HCT116 (cell line): ENCODE measurements at regions of chr17 and their contacts with region 1.

Region 1: GRCh38 chr17:58587702-58588254 is 73.3 kb upstream of the MTMR4 start:
- DNase-seq: peak; percentile 64
- ATAC-seq: peak; percentile 98
- H3K4me3 ChIP-seq: no peak overlapping the region
- H3K27ac ChIP-seq: no peak overlapping the region
- H3K4me1 ChIP-seq: no peaks in the 10 kb centered on the region
- H3K27me3 ChIP-seq: no peaks in the 10 kb centered on the region
- CTCF ChIP-seq: peak; percentile 80 to 100 (median 100); a peak in 5 of 6 replicates
- POLR2A ChIP-seq: no peak
- RAD21 ChIP-seq: peak; percentile 94

Region 2: DNA sequence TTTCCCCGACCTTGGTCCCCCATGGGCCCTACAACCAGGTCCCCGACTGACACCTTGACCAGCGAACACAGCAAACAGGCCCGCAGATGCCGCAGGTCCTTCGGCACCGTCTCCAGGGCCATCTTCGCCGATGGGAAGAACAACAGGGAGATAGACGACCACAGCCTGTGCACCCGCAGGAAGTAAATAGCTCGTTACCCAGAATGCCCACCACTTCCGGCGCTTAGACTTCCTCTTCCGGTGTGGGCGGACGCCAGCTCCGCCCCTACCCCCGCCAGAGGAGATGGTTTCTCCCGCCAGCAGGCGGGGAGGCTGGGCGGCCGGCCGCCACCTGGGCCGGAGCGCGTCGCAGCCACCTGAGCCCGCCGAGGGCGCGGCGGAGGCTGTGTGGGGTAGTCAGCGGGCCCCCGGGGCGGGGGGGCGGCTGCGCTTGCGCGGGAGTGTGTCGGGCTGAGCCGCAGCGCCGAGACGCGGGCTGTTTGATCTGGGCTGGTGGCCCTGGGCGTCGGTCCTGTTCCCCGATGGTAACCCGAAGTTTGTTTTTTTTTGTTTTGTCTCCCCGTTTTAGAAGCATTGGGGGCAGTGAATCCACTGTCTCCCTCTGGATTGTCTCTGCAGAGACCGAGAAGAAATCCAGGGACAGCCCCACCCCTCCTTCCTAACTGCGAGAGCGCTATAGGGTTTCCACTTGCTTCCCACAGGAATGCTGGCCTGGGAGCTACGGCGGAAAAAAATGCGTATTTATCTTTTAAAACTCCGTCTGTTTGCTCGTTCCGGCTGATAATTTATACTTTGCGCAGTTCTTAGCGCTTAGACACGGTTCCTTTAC is 235.6 kb before region 1 on chr17 and contains the start of gene SUPT4H1:
- CTCF ChIA-PET with region 1: no interaction called
- POLR2A ChIA-PET with region 1: no interaction called
- RAD21 ChIA-PET with region 1: no interaction called
- intact Hi-C with region 1: no loop called
- DNase-seq: peak; percentile 94
- ATAC-seq: peak; percentile 93
- H3K4me3 ChIP-seq: peak within 1 kb of the TSS; percentile 79 to 82
- H3K27ac ChIP-seq: peak within 1 kb of the TSS; percentile 73
- H3K4me1 ChIP-seq: peaks cover 16 to 22% of the 10 kb centered on the region in 2 experiments
- H3K27me3 ChIP-seq: no peaks in the 10 kb centered on the region
- CTCF ChIP-seq: no peak
- POLR2A ChIP-seq: peak; percentile 90
- RAD21 ChIP-seq: peak; percentile 38
- total RNA-seq, gene SUPT4H1: 118 TPM

Region 3: DNA sequence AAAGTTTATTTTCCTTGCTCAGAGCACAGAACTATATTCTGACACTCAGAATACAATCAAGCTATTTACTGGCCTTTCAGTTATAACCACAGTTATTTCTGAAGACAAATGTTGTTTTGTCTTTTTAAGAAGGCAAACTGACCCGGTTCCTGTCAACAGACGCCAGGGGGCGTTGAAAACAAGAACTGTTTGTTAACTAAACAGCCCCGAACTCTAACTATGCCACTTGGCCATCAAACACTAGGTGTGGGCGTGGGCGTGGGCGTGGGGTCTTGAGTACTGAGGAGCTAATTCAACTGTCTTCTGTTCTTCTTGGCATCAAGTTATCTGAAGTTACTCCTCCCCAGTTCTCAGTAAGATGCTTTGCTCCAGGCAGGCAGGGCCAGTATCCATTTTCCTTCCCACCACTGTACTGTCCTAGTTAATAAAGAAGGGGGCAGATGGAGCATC is 10.1 kb before region 1 on chr17:
- CTCF ChIA-PET with region 1: interaction called, 37 read pairs
- POLR2A ChIA-PET with region 1: interaction called, 4 read pairs
- RAD21 ChIA-PET with region 1: no interaction called
- intact Hi-C with region 1: no loop called
- DNase-seq: peak; percentile 77
- ATAC-seq: peak; percentile 87
- H3K4me3 ChIP-seq: no peak overlapping the region
- H3K27ac ChIP-seq: no peak overlapping the region
- H3K4me1 ChIP-seq: peaks cover 5 to 21% of the 10 kb centered on the region in 2 experiments
- H3K27me3 ChIP-seq: no peaks in the 10 kb centered on the region
- CTCF ChIP-seq: peak; percentile 56 to 98 (median 93); a peak in 5 of 6 replicates
- POLR2A ChIP-seq: no peak
- RAD21 ChIP-seq: peak; percentile 66

Region 4: DNA sequence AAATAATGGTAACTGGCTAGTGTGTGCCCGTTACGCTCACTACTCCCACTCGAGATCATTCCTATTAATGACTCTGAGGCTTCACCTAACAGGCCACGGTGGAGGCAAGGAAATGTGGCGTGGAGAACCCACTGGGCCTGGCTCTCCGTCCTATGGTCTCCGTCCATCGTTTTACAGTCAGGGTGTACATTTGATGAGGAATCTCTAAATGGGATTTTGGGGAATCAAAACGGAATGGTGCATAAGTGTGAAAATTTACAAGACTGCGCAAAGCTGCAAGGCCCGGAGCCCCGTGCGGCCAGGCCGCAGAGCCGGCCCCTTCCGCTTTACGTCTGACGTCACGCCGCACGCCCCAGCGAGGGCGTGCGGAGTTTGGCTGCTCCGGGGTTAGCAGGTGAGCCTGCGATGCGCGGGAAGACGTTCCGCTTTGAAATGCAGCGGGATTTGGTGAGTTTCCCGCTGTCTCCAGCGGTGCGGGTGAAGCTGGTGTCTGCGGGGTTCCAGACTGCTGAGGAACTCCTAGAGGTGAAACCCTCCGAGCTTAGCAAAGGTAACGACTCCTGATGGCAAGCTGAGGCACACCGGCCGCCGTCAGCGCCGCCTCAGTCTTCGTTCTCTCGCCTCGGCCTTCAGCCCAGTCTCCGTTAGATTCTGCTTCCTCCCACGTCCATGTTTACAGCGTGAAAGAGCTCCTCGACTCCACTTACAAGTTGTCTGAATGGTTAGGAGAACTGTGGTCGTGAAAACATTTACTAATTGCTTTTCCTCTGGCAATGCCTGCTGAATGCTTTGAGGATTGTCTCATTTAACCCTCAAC is 104.7 kb after region 1 on chr17 and contains the start of gene RAD51C:
- CTCF ChIA-PET with region 1: no interaction called
- POLR2A ChIA-PET with region 1: no interaction called
- RAD21 ChIA-PET with region 1: no interaction called
- intact Hi-C with region 1: loop called (anchors 2 kb)
- DNase-seq: peak; percentile 93
- ATAC-seq: peak; percentile 98
- H3K4me3 ChIP-seq: peak within 1 kb of the TSS; percentile 59 to 77
- H3K27ac ChIP-seq: peak within 1 kb of the TSS; percentile 69
- H3K4me1 ChIP-seq: peaks cover 13 to 18% of the 10 kb centered on the region in 2 experiments; a peak in 3 of 4 replicates
- H3K27me3 ChIP-seq: no peaks in the 10 kb centered on the region
- CTCF ChIP-seq: no peak
- POLR2A ChIP-seq: peak; percentile 97
- RAD21 ChIP-seq: peak; percentile 27
- total RNA-seq, gene RAD51C: 94.9 TPM

Region 5: DNA sequence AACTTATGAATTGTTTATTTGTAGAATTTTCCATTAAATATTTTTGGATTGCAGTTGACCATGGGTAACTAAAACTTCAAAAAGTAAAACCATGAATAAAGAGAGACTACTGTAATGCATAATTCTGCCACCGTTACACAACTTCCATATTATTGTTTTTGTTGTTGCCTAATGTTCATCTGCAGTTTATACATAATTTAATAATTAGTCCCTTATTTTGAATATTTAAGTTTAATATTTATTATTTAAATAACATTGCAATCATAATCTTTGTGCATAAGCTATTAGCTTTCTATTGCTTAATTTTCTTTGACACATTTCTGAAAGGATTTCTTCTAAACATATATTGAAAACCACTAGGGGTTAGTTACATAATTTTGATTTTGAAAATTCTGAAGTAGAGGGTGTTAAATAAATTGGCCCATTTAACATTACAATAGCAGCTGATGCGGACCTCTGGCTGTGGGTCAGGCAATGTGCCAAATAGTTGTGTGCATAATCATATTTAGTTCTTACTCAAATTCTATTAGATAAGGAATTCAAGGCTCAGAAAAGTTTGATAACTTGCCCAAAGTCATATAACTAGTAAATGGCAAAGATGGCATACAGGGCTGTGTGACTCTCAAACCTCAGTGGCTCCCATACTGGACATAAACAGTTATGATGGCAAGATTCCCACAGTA is 199.0 kb after region 1 on chr17:
- CTCF ChIA-PET with region 1: no interaction called
- POLR2A ChIA-PET with region 1: no interaction called
- RAD21 ChIA-PET with region 1: no interaction called
- intact Hi-C with region 1: no loop called
- DNase-seq: peak; percentile 65
- ATAC-seq: no peak
- H3K4me3 ChIP-seq: no peak overlapping the region
- H3K27ac ChIP-seq: no peak overlapping the region
- H3K4me1 ChIP-seq: peaks cover 17 to 20% of the 10 kb centered on the region in 2 experiments
- H3K27me3 ChIP-seq: no peaks in the 10 kb centered on the region
- CTCF ChIP-seq: no peak
- POLR2A ChIP-seq: no peak
- RAD21 ChIP-seq: no peak

Region 6: GRCh38 chr17:59004338-59005111 is 416.7 kb after region 1 on chr17:
- CTCF ChIA-PET with region 1: interaction called, 28 read pairs
- POLR2A ChIA-PET with region 1: no interaction called
- RAD21 ChIA-PET with region 1: interaction called in 1 of 2 experiments, 6 read pairs
- intact Hi-C with region 1: loop called (anchors 1 kb)
- DNase-seq: peak; percentile 59
- ATAC-seq: peak; percentile 88
- H3K4me3 ChIP-seq: no peak overlapping the region
- H3K27ac ChIP-seq: no peak overlapping the region
- H3K4me1 ChIP-seq: no peaks in the 10 kb centered on the region
- H3K27me3 ChIP-seq: no peaks in the 10 kb centered on the region
- CTCF ChIP-seq: peak; percentile 91 to 99 (median 98)
- POLR2A ChIP-seq: no peak
- RAD21 ChIP-seq: peak; percentile 97